Activated B cell treated with CpG ODN at 0.5 μM for 24 hours (primary cell): ENCODE measurements at regions of chr1 and their contacts with region 1.

Region 1: GRCh38 chr1:76317299-76317900 is 242.9 kb downstream of the ST6GALNAC3 start:
- DNase-seq: no peak
- ATAC-seq: no peak
- H3K4me3 Mint-ChIP-seq: no peak overlapping the region
- H3K27ac Mint-ChIP-seq: no peak overlapping the region
- H3K4me1 Mint-ChIP-seq: no peaks in the 10 kb centered on the region
- H3K27me3 Mint-ChIP-seq: no peaks in the 10 kb centered on the region
- CTCF ChIP-seq: no peak

Region 2: GRCh38 chr1:76269155-76269554 is 48.2 kb before region 1 on chr1:
- CTCF ChIA-PET with region 1: no interaction called
- POLR2A ChIA-PET with region 1: no interaction called
- intact Hi-C with region 1: no loop called
- DNase-seq: no peak
- ATAC-seq: no peak
- H3K4me3 Mint-ChIP-seq: no peak overlapping the region
- H3K27ac Mint-ChIP-seq: no peak overlapping the region
- H3K4me1 Mint-ChIP-seq: peaks cover 17% of the 10 kb centered on the region
- H3K27me3 Mint-ChIP-seq: no peaks in the 10 kb centered on the region
- CTCF ChIP-seq: no peak

Region 3: DNA sequence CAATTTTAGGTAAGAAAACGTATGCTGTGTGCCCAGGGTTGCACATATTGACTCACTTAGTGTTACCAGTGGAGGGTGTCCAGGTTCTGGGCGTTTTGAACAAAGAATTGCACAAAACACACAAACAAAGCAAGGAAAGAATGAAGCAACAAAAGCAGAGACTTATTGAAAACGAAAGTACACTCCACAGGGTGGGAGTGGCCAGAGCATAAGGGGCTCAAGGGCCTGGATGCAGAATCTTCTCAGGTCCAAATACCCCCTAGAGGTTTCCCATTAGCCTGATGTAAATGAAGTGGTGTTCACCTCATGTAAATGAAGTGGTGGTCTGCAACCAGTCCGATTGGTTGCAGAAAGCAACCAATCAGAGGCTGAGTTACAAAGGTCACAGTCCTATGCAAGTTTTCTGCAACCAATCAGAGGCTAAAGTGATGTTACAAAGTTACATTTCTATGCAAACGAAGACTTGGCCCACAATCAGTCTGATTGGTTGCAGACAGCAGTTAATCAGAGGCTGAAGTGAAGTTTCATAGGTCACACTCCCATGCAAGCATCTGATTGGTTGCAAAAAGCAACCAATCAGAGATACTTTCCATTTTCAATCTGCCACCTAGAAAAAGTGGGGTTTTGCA is 14.6 kb before region 1 on chr1:
- CTCF ChIA-PET with region 1: no interaction called
- POLR2A ChIA-PET with region 1: no interaction called
- intact Hi-C with region 1: loop called (anchors 2 kb)
- DNase-seq: no peak
- ATAC-seq: no peak
- H3K4me3 Mint-ChIP-seq: no peak overlapping the region
- H3K27ac Mint-ChIP-seq: no peak overlapping the region
- H3K4me1 Mint-ChIP-seq: no peaks in the 10 kb centered on the region
- H3K27me3 Mint-ChIP-seq: no peaks in the 10 kb centered on the region
- CTCF ChIP-seq: no peak